Psoas muscle (tissue), 8 donors: ENCODE measurements at regions of chr20 and their contacts with region 1.

Region 1: GRCh38 chr20:20734475-20734948 is 22.1 kb upstream of the RALGAPA2 start:
- DNase-seq: no peak
- ATAC-seq: no peak
- H3K4me3 ChIP-seq: no peak overlapping the region
- H3K27ac ChIP-seq: peak overlapping the region; percentile 89
- H3K4me1 ChIP-seq: peaks cover 30% of the 10 kb centered on the region
- H3K27me3 ChIP-seq: no peaks in the 10 kb centered on the region
- CTCF ChIP-seq: no peak

Region 2: DNA sequence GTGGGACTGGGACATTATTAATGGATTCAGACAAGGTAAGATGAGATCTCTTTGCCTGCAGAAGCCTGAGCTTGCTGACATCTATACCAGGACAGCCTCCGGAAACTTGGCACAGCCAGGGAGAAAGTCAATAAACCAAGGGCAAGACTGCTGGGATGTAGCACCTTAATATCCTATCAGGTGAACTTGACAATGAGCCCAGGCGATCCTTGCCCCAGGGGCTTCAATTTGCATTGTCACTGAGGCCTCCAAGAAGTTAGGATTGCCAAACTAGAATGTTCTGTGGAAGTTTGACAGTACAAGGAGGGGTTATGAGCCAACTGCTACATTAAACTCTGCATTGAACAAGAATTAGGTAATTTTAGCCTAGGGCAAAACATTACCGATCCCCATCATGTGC is 38.1 kb after region 1 on chr20:
- intact Hi-C with region 1: loop called in 1 of 2 experiments (anchors 5 kb)
- DNase-seq: no peak
- ATAC-seq: peak in 3 of 4 donors; percentile 47 to 70 (median 69)
- H3K4me3 ChIP-seq: no peak overlapping the region
- H3K27ac ChIP-seq: no peak overlapping the region
- H3K4me1 ChIP-seq: peaks cover 12% of the 10 kb centered on the region
- H3K27me3 ChIP-seq: no peaks in the 10 kb centered on the region
- CTCF ChIP-seq: no peak